ENCODE measurements at regions of chr3 and their contacts with region 1.

Region 1: DNA sequence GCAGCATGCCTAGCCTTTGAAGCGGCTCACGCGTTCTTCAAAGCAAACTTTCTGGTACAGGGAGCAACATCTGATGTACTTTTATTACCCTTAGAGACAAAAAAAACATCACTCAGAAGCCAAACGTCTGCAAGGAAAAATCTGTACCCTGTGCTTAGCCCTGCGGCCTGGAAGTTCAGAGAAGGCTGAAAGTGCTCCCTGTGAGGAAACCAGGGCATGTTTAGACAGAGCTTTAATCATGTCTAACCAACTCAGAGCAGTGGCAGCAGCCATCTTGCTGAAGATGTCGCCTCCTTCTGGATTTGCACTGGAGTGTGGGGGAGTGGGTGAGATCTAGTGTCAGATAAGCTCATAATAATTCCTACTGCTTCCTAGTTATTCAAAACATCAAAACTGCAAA is 170.4 kb downstream of the P3H2 start:
- DNase-seq: no peak
- CTCF ChIP-seq: no peak

Region 2: DNA sequence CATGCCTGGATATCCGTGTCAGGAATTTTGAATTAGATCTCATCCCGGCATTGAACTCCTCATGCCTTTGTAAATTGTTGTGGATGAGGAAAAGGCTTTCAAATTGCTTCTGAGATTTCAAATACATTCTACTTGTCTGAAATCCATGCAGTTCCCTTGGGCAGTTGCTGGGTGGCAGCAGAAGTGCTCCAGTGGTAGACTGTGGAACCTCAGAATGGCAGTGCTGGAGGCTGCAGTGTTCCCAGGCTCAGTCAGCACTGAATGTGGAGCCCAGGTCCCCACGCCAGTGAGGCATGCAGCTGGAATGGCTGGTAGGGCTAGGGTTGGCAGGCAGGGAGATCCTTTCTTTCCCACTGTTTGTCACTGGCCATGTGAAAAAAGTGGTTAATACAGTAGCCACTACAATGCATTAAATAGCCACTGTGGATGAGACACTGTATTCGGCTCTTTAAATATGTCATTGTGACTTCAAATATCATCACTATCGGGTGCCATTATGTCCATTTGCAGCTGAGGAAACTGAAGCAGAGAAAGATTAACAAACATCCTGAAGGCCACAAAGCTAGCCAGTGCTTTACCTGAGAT is 679.9 kb before region 1 on chr3:
- in situ Hi-C with region 1: loop called (anchors 10 kb)
- DNase-seq: no peak
- CTCF ChIP-seq: peak; percentile 79